ENCODE measurements at regions of chr12 and their contacts with region 1.

Region 1: GRCh38 chr12:6778574-6779550 is 6.5 kb downstream of the LAG3 start:
- DNase-seq: peak; percentile 98
- H3K4me3 ChIP-seq: peak overlapping the region; percentile 50 to 55 (median 52)
- H3K27ac ChIP-seq: peak overlapping the region; percentile 83 to 92 (median 87)
- H3K4me1 ChIP-seq: peaks cover 15 to 29% (median 27%) of the 10 kb centered on the region in 4 donors
- H3K27me3 ChIP-seq: no peaks in the 10 kb centered on the region
- CTCF ChIP-seq: peak; percentile 95 to 98 (median 96)
- EP300 ChIP-seq: no peak
- POLR2A ChIP-seq: no peak

Region 2: GRCh38 chr12:6735448-6736191 is 43.2 kb before region 1 on chr12:
- intact Hi-C with region 1: loop called (anchors 5 kb)
- DNase-seq: no peak
- H3K4me3 ChIP-seq: no peak overlapping the region
- H3K27ac ChIP-seq: peak overlapping the region; percentile 17 to 54 (median 48)
- H3K4me1 ChIP-seq: peaks cover 7 to 13% (median 10%) of the 10 kb centered on the region in 4 donors
- H3K27me3 ChIP-seq: no peaks in the 10 kb centered on the region
- CTCF ChIP-seq: peak; percentile 76 to 78 (median 77)
- EP300 ChIP-seq: no peak
- POLR2A ChIP-seq: no peak

Measured in esophagus muscularis mucosa (tissue), 4 donors.